ENCODE measurements at regions of chr11 and their contacts with region 1.

Region 1: GRCh38 chr11:65988791-65989592 is 13.0 kb downstream of the EIF1AD start:
- DNase-seq: peak; percentile 88
- H3K4me3 Mint-ChIP-seq: no peak overlapping the region
- H3K27ac Mint-ChIP-seq: peak overlapping the region; percentile 79
- H3K4me1 Mint-ChIP-seq: peaks cover 8% of the 10 kb centered on the region
- H3K27me3 Mint-ChIP-seq: no peaks in the 10 kb centered on the region

Region 2: GRCh38 chr11:64185816-64186498 is 1803.0 kb before region 1 on chr11 and contains the start of gene STIP1:
- intact Hi-C with region 1: no loop called
- DNase-seq: peak; percentile 99
- H3K4me3 Mint-ChIP-seq: peak within 1 kb of the TSS; percentile 95
- H3K27ac Mint-ChIP-seq: peak within 1 kb of the TSS; percentile 99
- H3K4me1 Mint-ChIP-seq: peaks cover 39% of the 10 kb centered on the region
- H3K27me3 Mint-ChIP-seq: peaks cover 2% of the 10 kb centered on the region
- total RNA-seq, gene STIP1: 493 and 495 TPM in 2 replicates

Region 3: GRCh38 chr11:65382033-65382807 is 606.8 kb before region 1 on chr11 and contains the start of gene SLC25A45:
- intact Hi-C with region 1: no loop called
- DNase-seq: peak; percentile 87
- H3K4me3 Mint-ChIP-seq: peak within 1 kb of the TSS; percentile 92
- H3K27ac Mint-ChIP-seq: peak within 1 kb of the TSS; percentile 99
- H3K4me1 Mint-ChIP-seq: peaks cover 34% of the 10 kb centered on the region
- H3K27me3 Mint-ChIP-seq: no peaks in the 10 kb centered on the region
- total RNA-seq, gene SLC25A45: 15.3 and 19.4 TPM in 2 replicates

Region 4: DNA sequence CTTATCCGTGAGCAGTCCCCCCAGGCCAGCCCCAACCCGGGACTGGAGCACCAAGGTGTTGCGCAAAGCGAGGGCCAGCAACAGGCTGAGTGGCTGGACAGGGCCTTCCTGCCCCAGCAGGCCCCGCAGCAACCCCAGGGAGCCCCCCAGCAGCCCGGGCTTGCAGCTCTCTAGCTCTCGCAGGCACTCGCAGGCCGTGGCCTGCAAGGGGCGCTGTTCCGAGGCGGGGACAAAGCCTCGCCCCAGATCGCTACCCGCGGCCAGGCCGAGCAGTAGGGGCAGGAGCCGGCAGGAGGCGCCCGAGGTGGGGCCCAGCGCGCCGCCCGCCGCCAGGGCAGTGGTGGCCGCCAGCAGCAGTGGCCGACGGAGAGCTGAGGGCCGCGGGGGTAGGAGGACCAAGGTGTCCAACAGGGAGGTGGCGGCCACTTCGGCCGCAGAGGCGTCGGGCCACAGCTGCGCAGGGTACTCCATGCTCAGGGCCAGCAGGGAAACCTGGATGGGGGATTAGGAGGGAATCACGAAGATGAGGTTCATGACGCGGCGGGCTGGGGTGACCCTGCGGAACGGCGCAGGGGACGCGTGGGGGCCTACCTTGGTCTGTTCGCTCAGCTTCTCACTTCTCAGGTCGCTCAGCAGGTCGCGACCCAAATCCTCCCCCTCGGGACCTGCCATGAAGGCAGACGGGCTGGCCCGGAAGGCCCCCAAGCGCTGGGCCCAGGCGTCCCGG is 209.0 kb before region 1 on chr11:
- intact Hi-C with region 1: loop called (anchors 1 kb)
- DNase-seq: peak; percentile 78
- H3K4me3 Mint-ChIP-seq: peak overlapping the region; percentile 88
- H3K27ac Mint-ChIP-seq: peak overlapping the region; percentile 91
- H3K4me1 Mint-ChIP-seq: peaks cover 27% of the 10 kb centered on the region
- H3K27me3 Mint-ChIP-seq: peaks cover 20% of the 10 kb centered on the region

Region 5: GRCh38 chr11:65919146-65920033 is 69.6 kb before region 1 on chr11 and contains the start of gene DRAP1:
- intact Hi-C with region 1: loop called (anchors 1 kb)
- DNase-seq: peak; percentile 97
- H3K4me3 Mint-ChIP-seq: peak within 1 kb of the TSS; percentile 94
- H3K27ac Mint-ChIP-seq: peak within 1 kb of the TSS; percentile 84
- H3K4me1 Mint-ChIP-seq: peaks cover 17% of the 10 kb centered on the region
- H3K27me3 Mint-ChIP-seq: no peaks in the 10 kb centered on the region
- total RNA-seq, gene DRAP1: 119 and 129 TPM in 2 replicates

Region 6: GRCh38 chr11:65961232-65961901 is 27.6 kb before region 1 on chr11 and contains the start of gene SART1:
- intact Hi-C with region 1: loop called (anchors 1 kb)
- DNase-seq: peak; percentile 94
- H3K4me3 Mint-ChIP-seq: peak within 1 kb of the TSS; percentile 98
- H3K27ac Mint-ChIP-seq: peak within 1 kb of the TSS; percentile 99
- H3K4me1 Mint-ChIP-seq: peaks cover 41% of the 10 kb centered on the region
- H3K27me3 Mint-ChIP-seq: no peaks in the 10 kb centered on the region
- total RNA-seq, gene SART1: 110 TPM in 2 replicates

Region 7: GRCh38 chr11:65973439-65974110 is 15.4 kb before region 1 on chr11:
- intact Hi-C with region 1: no loop called
- DNase-seq: no peak
- H3K4me3 Mint-ChIP-seq: no peak overlapping the region
- H3K27ac Mint-ChIP-seq: no peak overlapping the region
- H3K4me1 Mint-ChIP-seq: peaks cover 10% of the 10 kb centered on the region
- H3K27me3 Mint-ChIP-seq: no peaks in the 10 kb centered on the region

Region 8: DNA sequence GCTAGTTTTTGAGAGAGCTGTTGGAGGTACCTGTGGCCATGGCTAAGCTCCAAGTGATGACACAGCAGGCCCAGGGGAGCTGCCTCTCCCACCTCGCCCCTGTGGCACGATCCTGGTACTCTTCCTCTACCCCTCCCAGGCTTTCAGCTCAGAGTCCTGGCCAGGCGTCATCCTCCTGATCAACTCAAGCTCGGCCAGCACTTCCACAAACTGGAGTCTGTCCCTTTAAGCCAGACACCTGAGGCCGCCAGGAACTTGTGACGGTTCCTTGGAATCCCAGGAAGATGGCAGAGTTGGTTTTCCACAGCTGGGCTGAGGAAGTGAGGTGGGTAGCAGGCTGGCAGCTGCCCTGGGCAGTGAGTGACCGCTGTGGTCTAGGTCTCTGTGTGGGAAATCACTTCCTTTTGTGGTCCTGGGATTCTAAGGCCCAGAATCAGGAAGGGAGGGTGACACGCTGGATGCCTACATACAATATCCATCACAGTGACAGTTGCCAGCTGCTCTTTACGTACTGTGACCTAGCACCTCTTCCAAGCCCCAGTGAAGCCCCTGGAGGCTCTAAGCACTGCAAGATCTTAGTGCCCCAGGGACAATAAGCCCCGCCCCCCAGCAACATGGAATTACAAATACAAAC is 19.6 kb after region 1 on chr11:
- intact Hi-C with region 1: no loop called
- DNase-seq: no peak
- H3K4me3 Mint-ChIP-seq: no peak overlapping the region
- H3K27ac Mint-ChIP-seq: no peak overlapping the region
- H3K4me1 Mint-ChIP-seq: peaks cover 5% of the 10 kb centered on the region
- H3K27me3 Mint-ChIP-seq: peaks cover 20% of the 10 kb centered on the region

Measured in activated T-helper 1 cell treated with anti-CD3 and anti-CD28 coated beads, Interleukin-12 subunit alpha, Interleukin-12 subunit beta, Interleukin-2, Interleukin-4 antibody, amounts not matched to agents 30 ng/mL and 10 ng/mL and 1 ng/mL, durations not matched to agents 14 hours and 24 hours and 36 hours (primary cell).